Right cardiac atrium (tissue), 5 donors: ENCODE measurements at regions of chr13 and their contacts with region 1.

Region 1: GRCh38 chr13:95301183-95301967 is at the start of gene ABCC4:
- DNase-seq: peak; percentile 76 to 90 (median 88)
- ATAC-seq: peak; percentile 94 to 95
- H3K4me3 ChIP-seq: peak within 1 kb of the TSS; percentile 59
- H3K27ac ChIP-seq: peak within 1 kb of the TSS; percentile 19
- H3K4me1 ChIP-seq: no peaks in the 10 kb centered on the region
- H3K27me3 ChIP-seq: no peaks in the 10 kb centered on the region
- total RNA-seq, gene ABCC4: 3.5 to 5.8 (median 4.7) TPM

Region 2: DNA sequence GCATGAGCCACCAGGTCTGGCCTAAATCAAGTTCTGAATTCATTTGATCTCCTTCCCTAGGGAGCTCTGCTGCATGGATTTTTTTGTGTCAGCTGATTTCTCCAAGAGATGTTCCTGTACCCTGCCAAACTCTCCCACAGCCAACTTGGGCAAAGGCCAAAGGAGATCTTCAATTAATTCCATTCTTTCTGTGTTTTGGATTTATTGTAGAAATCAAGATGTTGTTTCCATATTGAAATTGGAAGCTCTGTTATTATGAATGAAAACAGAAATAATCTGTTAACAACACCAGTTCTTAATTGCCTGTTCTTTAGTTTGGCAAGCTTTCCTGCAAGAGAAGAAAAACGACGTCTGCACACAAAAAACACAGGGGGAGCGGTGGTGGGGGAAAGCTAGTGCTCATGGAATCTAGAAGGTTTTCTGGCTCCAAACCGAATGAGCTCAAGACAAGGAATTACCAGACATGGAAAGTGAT is 86.4 kb after region 1 on chr13:
- intact Hi-C with region 1: loop called in 3 of 4 experiments (anchors 10 kb)
- DNase-seq: peak; percentile 37 to 70 (median 63)
- ATAC-seq: peak; percentile 68 to 78
- H3K4me3 ChIP-seq: no peak overlapping the region
- H3K27ac ChIP-seq: no peak overlapping the region
- H3K4me1 ChIP-seq: no peaks in the 10 kb centered on the region
- H3K27me3 ChIP-seq: no peaks in the 10 kb centered on the region

Region 3: GRCh38 chr13:95403828-95404522 is 102.6 kb after region 1 on chr13:
- intact Hi-C with region 1: loop called in 1 of 4 experiments (anchors 10 kb)
- DNase-seq: peak; percentile 79 to 91 (median 90)
- ATAC-seq: peak; percentile 90 to 94
- H3K4me3 ChIP-seq: peak overlapping the region; percentile 14
- H3K27ac ChIP-seq: no peak overlapping the region
- H3K4me1 ChIP-seq: no peaks in the 10 kb centered on the region
- H3K27me3 ChIP-seq: no peaks in the 10 kb centered on the region

Region 4: DNA sequence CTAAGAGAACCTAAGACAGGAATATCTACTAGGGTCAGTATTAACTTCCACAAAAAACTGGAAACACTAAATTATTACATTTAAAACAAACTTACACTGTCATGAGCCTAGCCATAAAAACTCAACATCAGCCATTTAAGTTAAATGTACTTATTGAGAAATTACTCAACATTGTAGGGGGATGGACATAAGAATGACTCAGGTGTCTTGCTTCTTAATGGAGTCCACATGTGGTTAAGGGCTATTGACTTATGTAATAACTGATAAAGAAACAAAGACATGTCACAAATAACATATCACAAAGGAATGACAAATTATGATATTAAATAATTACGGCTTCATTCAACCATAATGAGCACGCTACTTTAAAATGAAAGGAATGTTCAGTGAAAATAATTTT is 287.3 kb after region 1 on chr13:
- intact Hi-C with region 1: no loop called
- DNase-seq: no peak
- ATAC-seq: no peak
- H3K4me3 ChIP-seq: no peak overlapping the region
- H3K27ac ChIP-seq: no peak overlapping the region
- H3K4me1 ChIP-seq: no peaks in the 10 kb centered on the region
- H3K27me3 ChIP-seq: no peaks in the 10 kb centered on the region

Region 5: GRCh38 chr13:96373597-96373996 is 1072.2 kb after region 1 on chr13:
- intact Hi-C with region 1: no loop called
- DNase-seq: no peak
- ATAC-seq: no peak
- H3K4me3 ChIP-seq: no peak overlapping the region
- H3K27ac ChIP-seq: no peak overlapping the region
- H3K4me1 ChIP-seq: no peaks in the 10 kb centered on the region
- H3K27me3 ChIP-seq: no peaks in the 10 kb centered on the region